Heart left ventricle (tissue), 16 donors: ENCODE measurements at regions of chr3 and their contacts with region 1.

Region 1: DNA sequence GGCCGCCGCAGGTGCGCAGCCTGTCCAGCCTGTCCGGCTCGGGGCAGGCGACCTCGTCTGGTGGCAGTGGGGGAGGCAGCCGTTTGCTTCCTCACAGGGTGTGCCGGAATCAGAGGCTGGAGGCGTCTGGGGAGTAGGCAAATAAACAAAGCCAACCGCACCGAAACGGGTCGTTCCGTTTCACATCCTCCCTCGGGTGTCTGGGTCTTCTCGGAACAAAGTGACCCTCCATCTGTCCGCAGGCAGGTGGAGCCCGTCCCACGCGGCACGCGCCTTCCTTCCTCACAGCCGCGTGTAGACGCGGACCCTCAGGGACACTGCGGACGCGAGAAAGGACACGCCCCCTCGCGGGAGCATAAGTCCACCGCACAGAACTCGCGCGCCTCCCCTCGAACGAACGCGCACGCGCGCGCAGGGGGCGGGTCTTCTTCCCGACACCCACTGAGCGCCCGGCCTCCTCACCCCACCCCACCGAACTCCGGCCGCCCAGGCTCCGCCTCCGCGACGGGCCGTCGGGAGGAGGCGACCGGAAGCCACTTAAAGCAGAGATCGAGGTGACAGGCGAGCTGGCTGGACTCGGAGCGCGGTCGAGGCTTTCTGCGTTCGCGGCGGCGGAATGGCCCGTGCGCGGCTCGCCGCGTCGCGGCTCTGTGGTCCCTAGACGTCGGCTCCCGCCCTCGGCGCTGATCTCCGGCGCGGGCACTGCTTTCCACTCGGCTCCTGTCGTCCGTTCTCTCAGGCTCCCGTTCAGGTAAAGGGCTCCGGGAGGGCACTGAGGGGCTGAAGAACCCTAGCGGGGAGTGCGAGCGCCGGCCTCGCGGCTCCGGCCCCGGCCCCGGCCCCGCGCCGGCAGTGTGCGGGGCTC is at the start of gene TIPARP:
- DNase-seq: peak; percentile 99 to 100 (median 100)
- ATAC-seq: peak; percentile 92 to 98 (median 96)
- H3K4me3 ChIP-seq: peak within 1 kb of the TSS; percentile 66 to 97 (median 80)
- H3K27ac ChIP-seq: peak within 1 kb of the TSS; percentile 88 to 99 (median 96)
- H3K4me1 ChIP-seq: peaks cover 0 to 51% (median 29%) of the 10 kb centered on the region in 12 donors
- H3K27me3 ChIP-seq: no peaks in the 10 kb centered on the region
- CTCF ChIP-seq: peak; percentile 55 to 88 (median 77)
- POLR2A ChIP-seq: peak; percentile 81 to 99
- total RNA-seq, gene TIPARP: 17.8 to 46.8 (median 33.8) TPM

Region 2: GRCh38 chr3:156605686-156606605 is 68.3 kb before region 1 on chr3:
- intact Hi-C with region 1: loop called in 1 of 10 experiments (anchors 2 kb)
- DNase-seq: peak; percentile 35 to 73 (median 63)
- ATAC-seq: peak; percentile 79 to 91 (median 87)
- H3K4me3 ChIP-seq: peak overlapping the region in 10 of 12 donors; percentile 9 to 59 (median 49)
- H3K27ac ChIP-seq: peak overlapping the region; percentile 20 to 86 (median 72)
- H3K4me1 ChIP-seq: peaks cover 0 to 24% (median 5%) of the 10 kb centered on the region in 12 donors
- H3K27me3 ChIP-seq: no peaks in the 10 kb centered on the region
- CTCF ChIP-seq: no peak
- POLR2A ChIP-seq: no peak

Region 3: GRCh38 chr3:156826144-156826895 is 152.0 kb after region 1 on chr3 and contains the start of gene LEKR1:
- intact Hi-C with region 1: loop called in 7 of 10 experiments (anchors 2 to 10 kb)
- DNase-seq: peak; percentile 89 to 93 (median 91)
- ATAC-seq: peak; percentile 85 to 98 (median 96)
- H3K4me3 ChIP-seq: peak within 1 kb of the TSS; percentile 56 to 94 (median 67)
- H3K27ac ChIP-seq: peak within 1 kb of the TSS; percentile 83 to 96 (median 89)
- H3K4me1 ChIP-seq: peaks cover 0 to 17% (median 6%) of the 10 kb centered on the region in 12 donors
- H3K27me3 ChIP-seq: no peaks in the 10 kb centered on the region
- CTCF ChIP-seq: peak in 1 of 12 donors; percentile 4
- POLR2A ChIP-seq: peak; percentile 14 to 72
- total RNA-seq, gene LEKR1: 0.23 to 1.8 (median 1.0) TPM in 8 of 9 donors, not detected in the other

Region 4: DNA sequence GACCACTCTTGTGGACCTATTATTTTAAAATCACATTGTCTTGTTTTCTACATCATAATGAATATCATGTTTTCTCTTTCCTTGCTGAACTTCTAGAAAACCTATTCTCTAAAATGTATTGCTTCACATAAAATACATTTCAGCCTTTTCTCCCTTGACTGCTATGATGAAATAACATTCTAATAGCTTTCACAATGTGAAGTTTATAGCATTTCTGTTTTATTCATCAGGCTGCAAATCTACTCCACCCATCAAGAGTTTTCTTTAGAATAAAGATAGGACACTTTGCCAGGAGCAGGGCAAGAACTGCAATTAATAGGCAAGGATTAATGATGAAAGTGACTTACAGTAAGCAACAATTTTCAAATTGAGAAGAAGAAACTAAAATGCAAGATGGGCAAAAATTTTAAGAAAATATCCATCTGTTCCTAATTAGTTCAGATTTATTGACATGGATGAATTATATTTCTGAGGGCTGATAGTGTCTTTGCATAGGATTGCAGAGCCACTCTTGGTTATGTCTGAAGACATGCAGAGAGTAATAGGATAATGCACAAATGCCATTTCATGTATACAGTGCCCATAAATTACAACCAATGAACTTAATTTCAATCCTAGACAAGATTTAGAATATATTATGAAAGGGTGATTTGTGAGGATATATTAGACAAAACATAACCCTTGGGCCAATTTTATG is 173.6 kb after region 1 on chr3:
- intact Hi-C with region 1: no loop called
- DNase-seq: no peak
- ATAC-seq: no peak
- H3K4me3 ChIP-seq: no peak overlapping the region
- H3K27ac ChIP-seq: no peak overlapping the region
- H3K4me1 ChIP-seq: peaks cover 0 to 2% (median 0%) of the 10 kb centered on the region in 12 donors
- H3K27me3 ChIP-seq: no peaks in the 10 kb centered on the region
- CTCF ChIP-seq: no peak
- POLR2A ChIP-seq: no peak

Region 5: DNA sequence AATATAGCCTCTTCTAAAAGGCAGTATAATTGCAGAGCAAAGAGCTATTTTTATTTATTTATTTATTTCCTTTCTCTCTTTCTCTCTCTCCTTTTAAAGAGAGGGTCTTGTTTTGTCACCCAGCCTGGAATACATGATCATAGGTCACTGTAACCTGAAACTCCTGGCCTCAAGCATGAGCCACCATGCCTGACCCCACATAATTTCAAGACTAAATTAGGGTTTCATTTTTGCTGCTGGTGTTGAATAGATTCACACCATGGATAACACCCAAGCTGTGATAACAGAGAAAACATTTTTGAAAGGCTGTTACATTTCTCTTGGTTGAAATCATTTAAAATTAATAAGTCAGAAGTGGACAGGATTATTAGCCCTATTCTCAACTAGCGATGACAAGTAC is 283.4 kb after region 1 on chr3:
- intact Hi-C with region 1: no loop called
- DNase-seq: no peak
- ATAC-seq: no peak
- H3K4me3 ChIP-seq: no peak overlapping the region
- H3K27ac ChIP-seq: no peak overlapping the region
- H3K4me1 ChIP-seq: no peaks in the 10 kb centered on the region
- H3K27me3 ChIP-seq: no peaks in the 10 kb centered on the region
- CTCF ChIP-seq: no peak
- POLR2A ChIP-seq: no peak